Cardiac septum (tissue), 1 donor: ENCODE measurements at regions of chrX and their contacts with region 1.

Region 1: GRCh38 chrX:9341291-9342201 is 123.3 kb upstream of the TBL1X start:
- DNase-seq: no peak

Region 2: DNA sequence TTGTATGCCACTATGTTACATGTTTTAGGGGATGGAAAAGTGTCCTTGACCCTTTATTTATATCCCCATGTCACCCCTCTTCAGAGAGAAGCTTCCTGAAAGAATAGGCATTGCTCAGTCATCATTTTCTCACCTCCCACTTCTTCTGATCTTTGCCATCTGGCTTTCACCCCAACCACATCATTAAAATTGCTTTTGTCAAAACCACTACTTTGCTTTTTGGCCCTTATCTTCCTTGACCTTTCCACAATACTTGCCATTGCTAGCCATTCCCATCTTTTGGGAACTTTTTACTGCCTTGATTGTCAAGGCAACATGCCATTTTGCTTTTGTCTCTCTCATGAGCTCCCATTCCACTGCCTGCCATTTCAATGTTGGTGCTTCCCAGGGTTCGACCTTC is 292.7 kb before region 1 on chrX:
- intact Hi-C with region 1: no loop called
- DNase-seq: no peak

Region 3: DNA sequence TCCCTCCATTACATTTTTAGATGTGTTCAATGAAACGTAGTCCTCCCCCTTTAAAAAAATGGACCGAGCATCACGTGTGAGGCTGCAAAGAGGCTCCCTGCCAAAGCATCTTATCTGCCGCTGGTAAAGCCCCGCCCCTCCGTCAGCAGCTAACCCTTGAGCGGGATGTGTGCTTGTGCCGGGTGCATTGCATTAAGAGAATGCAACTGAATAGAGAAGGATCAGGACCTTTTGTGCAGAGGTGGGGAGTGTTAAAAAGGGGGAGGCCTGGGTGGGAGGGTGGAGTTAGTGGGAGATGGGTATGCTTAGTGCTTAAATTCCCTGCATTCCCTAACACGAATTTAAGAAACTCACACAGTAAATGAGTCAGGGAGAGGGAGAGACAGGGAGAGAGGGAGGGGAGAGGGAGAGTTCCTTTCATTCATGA is 189.3 kb after region 1 on chrX:
- intact Hi-C with region 1: loop called (anchors 5 kb)
- DNase-seq: no peak

Region 4: DNA sequence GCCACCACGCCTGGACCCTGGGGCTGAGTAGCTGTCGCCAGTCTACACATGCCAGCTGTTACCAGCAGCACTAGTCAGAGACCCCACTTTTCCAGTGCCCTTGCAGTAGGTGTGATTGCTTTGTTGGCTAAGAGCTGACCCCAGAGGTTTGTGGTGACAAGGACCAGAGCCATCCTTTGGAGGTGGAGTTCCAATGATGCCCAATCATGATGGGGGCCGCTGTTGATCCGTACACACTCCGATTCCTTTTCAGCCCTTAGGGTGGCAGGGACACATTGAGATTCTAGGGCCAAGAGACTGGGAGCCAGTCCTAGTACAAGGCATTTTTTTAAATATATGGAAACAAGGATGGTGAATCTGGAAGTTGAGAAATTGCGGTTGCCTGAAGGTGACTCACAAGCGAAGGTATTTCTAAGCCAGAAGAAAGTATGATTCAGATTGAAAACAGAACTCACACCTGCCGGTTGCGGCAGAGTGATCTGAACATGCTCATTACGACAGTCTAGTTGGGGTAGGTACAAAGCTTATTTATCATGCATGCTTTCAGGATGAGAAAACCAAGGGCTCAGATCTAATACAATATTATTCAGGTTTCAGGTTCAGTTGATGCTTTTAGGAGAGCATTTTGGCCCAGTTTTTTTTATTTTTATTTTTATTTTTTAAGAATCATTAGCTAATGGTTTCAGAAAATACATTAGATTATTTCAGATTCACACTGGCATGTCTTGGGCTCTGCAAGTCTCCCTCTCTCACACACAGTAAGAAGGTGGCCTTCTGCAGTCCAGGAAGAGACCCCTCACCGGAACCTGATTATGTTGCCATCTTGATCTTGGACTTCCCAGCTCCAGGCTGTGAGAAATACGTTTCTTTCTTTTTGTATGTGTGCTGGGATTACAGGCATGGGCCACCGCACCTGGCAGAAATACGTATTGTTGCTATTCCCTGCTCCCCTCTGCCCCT is 488.0 kb after region 1 on chrX:
- intact Hi-C with region 1: no loop called
- DNase-seq: peak; percentile 17